ENCODE measurements at regions of chr6 and their contacts with region 1.

Region 1: GRCh38 chr6:150016324-150017185 is 8.8 kb downstream of the RAET1L start:
- DNase-seq: peak; percentile 20 to 52
- ATAC-seq: peak; percentile 87 to 90
- H3K4me3 ChIP-seq: no peak overlapping the region
- H3K27ac ChIP-seq: no peak overlapping the region
- H3K4me1 ChIP-seq: no peaks in the 10 kb centered on the region
- H3K27me3 ChIP-seq: peaks cover 38 to 52% (median 52%) of the 10 kb centered on the region in 3 donors
- CTCF ChIP-seq: peak; percentile 68 to 82 (median 81)
- POLR2A ChIP-seq: no peak

Region 2: DNA sequence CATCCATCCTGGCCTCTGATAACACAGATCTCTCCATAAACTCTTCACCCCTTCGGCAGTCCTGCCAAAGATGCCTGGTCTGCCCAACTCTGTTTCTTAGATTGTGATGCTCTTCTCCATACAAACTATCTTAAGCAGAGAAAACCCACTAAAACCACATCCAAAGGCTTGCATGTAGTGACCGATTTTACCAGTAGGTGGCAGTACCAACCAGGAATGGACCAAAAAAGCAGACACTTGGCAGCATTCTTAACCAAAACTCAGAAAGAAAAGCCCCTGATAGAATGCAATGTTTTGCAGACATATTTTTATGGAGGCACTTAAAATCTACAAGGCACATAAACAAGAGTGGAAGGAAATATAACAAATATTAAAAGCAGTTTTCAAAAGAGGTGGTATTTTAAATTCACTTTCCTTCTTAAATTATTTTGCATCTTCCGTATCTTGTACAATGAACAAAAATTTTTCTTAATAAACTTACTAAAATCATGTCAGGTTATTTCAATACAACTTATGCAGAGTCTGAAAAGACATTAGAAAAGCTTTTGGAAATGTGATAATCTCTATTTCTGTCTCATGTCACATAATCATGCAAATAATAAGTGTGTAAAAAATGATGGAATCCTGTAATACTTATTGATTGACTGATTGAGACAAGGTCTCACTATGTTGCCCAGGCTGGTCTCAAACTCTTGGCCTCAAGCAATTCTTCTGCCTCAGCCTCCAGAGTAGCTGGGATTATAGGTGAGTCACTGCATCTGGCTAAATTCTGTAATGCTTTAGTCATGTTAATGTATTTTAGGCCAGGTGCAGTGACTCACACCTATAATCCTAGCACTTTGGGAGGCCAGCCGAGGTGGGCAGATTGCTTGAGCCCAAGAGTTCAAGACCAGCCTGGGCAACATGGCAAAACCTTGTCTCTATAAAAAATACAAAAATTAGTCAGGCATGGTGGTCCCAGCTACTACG is 181.8 kb before region 1 on chr6:
- in situ Hi-C with region 1: loop called in 2 of 4 experiments (anchors 10 to 25 kb)
- intact Hi-C with region 1: loop called (anchors 5 kb)
- DNase-seq: peak in 1 of 2 donors; percentile 22
- ATAC-seq: peak in 1 of 2 donors; percentile 56
- H3K4me3 ChIP-seq: no peak overlapping the region
- H3K27ac ChIP-seq: no peak overlapping the region
- H3K4me1 ChIP-seq: peaks cover 4 to 6% of the 10 kb centered on the region in 2 donors
- H3K27me3 ChIP-seq: no peaks in the 10 kb centered on the region
- CTCF ChIP-seq: peak; percentile 84 to 96 (median 90)
- POLR2A ChIP-seq: no peak

Region 3: DNA sequence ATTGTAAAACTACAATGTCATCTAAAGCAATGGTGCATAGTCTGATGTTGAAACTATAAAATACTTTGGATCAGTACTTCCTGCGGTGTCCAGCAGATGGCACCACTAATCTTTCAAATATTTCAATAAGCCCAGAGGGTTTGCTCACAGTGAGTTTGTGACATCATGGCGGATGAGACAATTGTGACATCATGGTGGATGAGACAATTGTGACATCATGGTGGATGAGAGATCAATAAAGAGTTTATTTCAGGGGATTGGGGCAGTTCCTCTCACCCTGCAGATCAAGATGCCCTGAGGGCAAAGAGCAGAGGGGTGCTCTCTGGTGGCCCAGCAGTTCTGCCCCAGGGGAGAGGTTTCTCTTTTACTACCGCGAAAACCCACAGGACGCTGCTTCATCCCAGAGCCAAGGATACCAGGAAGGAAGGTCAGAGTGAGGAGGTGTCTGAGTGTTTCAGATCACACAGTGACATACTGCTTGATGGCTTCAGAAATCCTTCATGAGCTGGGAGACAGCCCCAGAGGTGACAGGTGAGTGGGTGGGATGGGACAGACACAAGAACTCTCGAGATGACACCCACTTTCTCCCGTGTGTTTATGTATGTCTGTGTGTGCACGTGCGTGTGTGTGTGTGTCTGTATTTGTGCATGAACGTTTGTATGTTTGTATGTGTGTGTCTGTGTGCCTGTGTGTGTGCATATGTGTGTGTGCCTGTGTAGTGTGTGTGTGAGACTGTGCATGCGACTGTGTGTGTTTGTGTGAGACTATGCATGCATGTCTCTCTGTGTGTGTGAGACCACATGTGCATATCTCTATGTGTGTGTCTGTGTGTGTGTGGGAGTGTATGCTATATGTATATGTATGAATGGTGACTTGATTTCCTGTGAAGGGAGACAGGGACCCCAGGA is 82.1 kb before region 1 on chr6:
- in situ Hi-C with region 1: loop called (anchors 5 kb)
- intact Hi-C with region 1: loop called (anchors 1 kb)
- DNase-seq: no peak
- ATAC-seq: peak; percentile 53 to 82
- H3K4me3 ChIP-seq: no peak overlapping the region
- H3K27ac ChIP-seq: no peak overlapping the region
- H3K4me1 ChIP-seq: peaks cover 10 to 12% of the 10 kb centered on the region in 2 donors
- H3K27me3 ChIP-seq: peaks cover 30 to 64% (median 52%) of the 10 kb centered on the region in 3 donors
- CTCF ChIP-seq: peak; percentile 77 to 87 (median 84)
- POLR2A ChIP-seq: no peak

Measured in gastrocnemius medialis (tissue), 4 donors.